Activated naive CD8-positive, alpha-beta T cell treated with anti-CD3 and anti-CD28 coated beads, Interleukin-2, amount 10 ng/mL, durations not matched to agents 7 days and 5 days (primary cell): ENCODE measurements at regions of chr15 and their contacts with region 1.

Region 1: DNA sequence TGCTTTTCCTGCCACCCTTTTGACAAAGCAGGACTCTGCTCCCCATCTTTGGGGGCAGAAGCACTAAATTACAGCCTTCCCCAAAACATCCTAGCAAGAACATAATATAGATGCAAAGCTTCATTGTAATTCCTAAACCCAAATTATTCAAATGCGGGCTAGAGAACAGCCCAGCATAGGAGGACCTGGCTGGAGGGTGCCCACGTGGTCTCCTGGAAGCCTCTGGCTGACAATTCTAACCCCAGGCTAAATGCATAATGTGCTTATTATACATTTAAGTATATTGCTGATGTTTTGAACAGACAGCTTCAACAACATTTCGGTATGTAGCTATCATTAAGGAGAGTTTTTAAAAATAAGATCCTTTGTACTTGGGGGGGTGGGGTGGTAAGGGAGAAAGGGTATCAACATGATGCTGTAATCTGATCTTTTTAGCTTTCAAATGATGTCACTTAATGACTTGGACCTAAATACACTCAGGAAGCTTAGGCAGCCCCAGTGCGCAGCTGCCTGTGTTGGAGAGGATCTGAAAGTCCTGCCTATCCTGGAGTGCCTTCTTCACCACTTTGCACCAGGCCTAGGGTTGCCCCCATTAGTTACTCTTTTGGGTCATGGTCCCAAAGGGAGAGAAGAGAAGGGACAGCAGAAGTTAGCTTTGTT is 57.2 kb upstream of the USP3 start:
- DNase-seq: no peak
- ATAC-seq: no peak
- H3K4me3 Mint-ChIP-seq: no peak overlapping the region
- H3K27ac Mint-ChIP-seq: no peak overlapping the region
- H3K4me1 Mint-ChIP-seq: peaks cover 10% of the 10 kb centered on the region
- H3K27me3 Mint-ChIP-seq: peaks cover 2% of the 10 kb centered on the region

Region 2: GRCh38 chr15:63436872-63437375 is 10.2 kb before region 1 on chr15:
- POLR2A ChIA-PET with region 1: interaction called, 10 read pairs
- DNase-seq: peak; percentile 75
- ATAC-seq: peak; percentile 99
- H3K4me3 Mint-ChIP-seq: peak overlapping the region; percentile 39
- H3K27ac Mint-ChIP-seq: peak overlapping the region; percentile 93
- H3K4me1 Mint-ChIP-seq: peaks cover 21% of the 10 kb centered on the region
- H3K27me3 Mint-ChIP-seq: no peaks in the 10 kb centered on the region

Region 3: DNA sequence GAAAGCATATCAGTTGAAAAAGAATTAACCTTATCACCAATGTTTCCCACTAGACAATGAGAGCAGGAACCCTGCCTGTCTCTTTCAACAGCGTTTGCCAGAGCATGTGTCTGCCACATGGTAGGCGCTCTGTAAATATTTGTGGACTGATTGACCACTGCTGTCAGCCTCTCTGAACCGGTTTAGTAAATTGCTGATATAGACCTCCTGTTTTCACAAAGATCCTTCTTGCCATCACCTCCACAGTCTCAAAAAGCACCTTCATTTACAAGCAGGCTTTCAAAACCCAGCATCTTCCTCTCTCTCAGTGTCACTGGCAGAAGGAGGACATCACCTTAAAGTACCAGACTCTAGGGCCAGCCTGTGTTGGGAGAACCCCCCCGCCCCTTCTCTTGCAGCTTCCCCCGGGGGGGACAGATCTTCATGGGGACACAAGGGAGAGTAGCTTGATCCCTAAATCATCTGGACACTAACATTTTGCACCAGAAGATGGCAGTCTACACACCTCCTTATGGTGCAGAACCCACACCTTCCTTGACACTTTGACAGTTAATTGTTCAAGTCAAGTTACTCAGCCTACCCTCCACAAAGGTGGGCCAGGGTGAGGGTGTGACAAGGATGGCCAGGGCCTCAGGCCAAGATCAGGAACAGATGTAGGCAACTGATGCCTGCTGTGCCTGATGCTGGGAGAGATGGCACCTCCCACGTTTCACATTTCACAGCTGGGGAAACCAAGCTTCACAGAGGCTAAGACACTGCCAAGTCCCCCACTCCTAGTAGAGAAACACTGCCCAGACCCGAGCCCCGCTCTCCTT is 19.4 kb after region 1 on chr15:
- POLR2A ChIA-PET with region 1: no interaction called
- DNase-seq: peak; percentile 48
- ATAC-seq: peak; percentile 88
- H3K4me3 Mint-ChIP-seq: no peak overlapping the region
- H3K27ac Mint-ChIP-seq: no peak overlapping the region
- H3K4me1 Mint-ChIP-seq: peaks cover 9% of the 10 kb centered on the region
- H3K27me3 Mint-ChIP-seq: peaks cover 11% of the 10 kb centered on the region

Region 4: GRCh38 chr15:63560741-63561448 is 113.7 kb after region 1 on chr15:
- POLR2A ChIA-PET with region 1: no interaction called
- DNase-seq: no peak
- ATAC-seq: no peak
- H3K4me3 Mint-ChIP-seq: no peak overlapping the region
- H3K27ac Mint-ChIP-seq: no peak overlapping the region
- H3K4me1 Mint-ChIP-seq: peaks cover 6% of the 10 kb centered on the region
- H3K27me3 Mint-ChIP-seq: no peaks in the 10 kb centered on the region

Region 5: GRCh38 chr15:63663906-63664305 is 216.8 kb after region 1 on chr15:
- POLR2A ChIA-PET with region 1: no interaction called
- DNase-seq: no peak
- ATAC-seq: no peak
- H3K4me3 Mint-ChIP-seq: no peak overlapping the region
- H3K27ac Mint-ChIP-seq: no peak overlapping the region
- H3K4me1 Mint-ChIP-seq: peaks cover 6% of the 10 kb centered on the region
- H3K27me3 Mint-ChIP-seq: no peaks in the 10 kb centered on the region